ENCODE measurements at regions of chr16 and their contacts with region 1.

Region 1: DNA sequence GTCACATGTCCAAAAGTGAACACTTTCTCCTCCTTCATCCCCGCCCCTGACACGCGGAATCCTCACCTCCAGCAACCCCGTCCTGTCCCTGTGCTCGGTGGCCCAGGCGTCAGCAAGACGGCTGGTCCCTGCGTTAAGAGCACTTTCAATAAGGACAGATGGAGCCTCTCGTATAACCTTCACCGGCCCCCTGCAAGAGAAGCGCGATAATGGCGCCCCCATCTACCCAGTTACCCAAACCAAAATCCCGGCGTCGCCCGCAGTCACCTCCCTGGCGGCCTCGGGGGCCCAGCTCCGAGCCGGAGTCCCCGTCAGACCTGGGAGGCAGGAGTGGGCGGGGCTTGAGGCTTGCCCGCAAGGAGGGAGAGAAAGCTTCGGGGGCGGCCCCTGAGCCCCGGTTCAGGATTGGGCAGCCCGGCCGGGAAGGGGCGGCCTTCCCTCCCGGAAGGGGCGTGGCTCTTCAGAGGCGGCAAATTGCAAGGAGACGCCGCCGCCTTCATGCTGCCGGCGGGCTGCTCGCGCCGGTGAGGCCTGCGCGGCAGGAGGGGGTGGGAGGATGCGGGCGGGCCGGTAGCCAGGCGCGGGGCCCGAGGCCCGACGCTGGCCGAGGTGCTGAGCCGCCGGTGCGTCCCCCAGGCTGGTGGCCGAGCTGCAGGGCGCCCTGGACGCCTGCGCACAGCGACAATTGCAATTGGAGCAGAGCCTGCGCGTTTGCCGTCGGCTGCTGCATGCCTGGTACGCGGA is at the start of gene TEDC2:
- DNase-seq: peak; percentile 98 to 99 (median 98)
- ATAC-seq: peak; percentile 97
- H3K4me3 ChIP-seq: peak within 1 kb of the TSS; percentile 20
- H3K27ac ChIP-seq: no peak within 1 kb of the TSS
- H3K4me1 ChIP-seq: no peaks in the 10 kb centered on the region
- H3K27me3 ChIP-seq: no peaks in the 10 kb centered on the region
- total RNA-seq, gene TEDC2: 0.58 to 2.2 (median 1.2) TPM

Region 2: GRCh38 chr16:2474877-2475412 is 15.1 kb after region 1 on chr16 and contains the start of gene TBC1D24:
- intact Hi-C with region 1: loop called in 1 of 4 experiments (anchors 1 kb)
- DNase-seq: peak; percentile 89 to 97 (median 96)
- ATAC-seq: peak; percentile 90 to 91
- H3K4me3 ChIP-seq: peak within 1 kb of the TSS; percentile 88
- H3K27ac ChIP-seq: peak within 1 kb of the TSS; percentile 53
- H3K4me1 ChIP-seq: peaks cover 2% of the 10 kb centered on the region
- H3K27me3 ChIP-seq: no peaks in the 10 kb centered on the region
- total RNA-seq, gene TBC1D24: 11.6 to 15.5 (median 13.0) TPM

Region 3: GRCh38 chr16:2752035-2752849 is 292.4 kb after region 1 on chr16 and contains the start of gene SRRM2:
- intact Hi-C with region 1: no loop called
- DNase-seq: peak; percentile 96 to 98 (median 98)
- ATAC-seq: peak; percentile 94 to 96
- H3K4me3 ChIP-seq: peak within 1 kb of the TSS; percentile 90
- H3K27ac ChIP-seq: peak within 1 kb of the TSS; percentile 98
- H3K4me1 ChIP-seq: peaks cover 17% of the 10 kb centered on the region
- H3K27me3 ChIP-seq: no peaks in the 10 kb centered on the region
- total RNA-seq, gene SRRM2: 299 to 352 (median 320) TPM

Measured in right cardiac atrium (tissue), 5 donors.